GM10248 (cell line): ENCODE measurements at regions of chr3 and their contacts with region 1.

Region 1: DNA sequence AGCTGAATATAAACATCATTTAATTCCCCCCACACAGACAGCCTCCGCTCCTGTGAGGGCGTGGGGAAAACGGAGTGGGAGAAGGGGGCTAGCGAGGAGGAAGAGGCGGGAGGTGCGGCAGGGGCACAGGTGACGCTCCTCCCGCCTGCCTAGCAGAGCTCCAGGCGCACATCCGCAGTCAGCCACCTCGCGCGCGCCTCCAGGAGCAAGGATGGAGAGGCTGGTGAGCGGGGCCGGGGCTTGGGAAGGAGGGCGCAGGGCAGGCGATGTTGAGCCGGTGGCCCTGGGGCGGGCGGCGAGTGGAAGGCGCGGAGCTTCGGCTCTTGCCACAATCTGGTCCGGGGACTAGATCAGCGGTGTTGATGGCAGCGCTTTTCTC is at the start of gene CD200:
- DNase-seq: peak; percentile 55
- CTCF ChIP-seq: no peak

Region 2: GRCh38 chr3:112086076-112086854 is 246.7 kb before region 1 on chr3 and contains the start of gene C3orf52:
- CTCF ChIA-PET with region 1: no interaction called
- POLR2A ChIA-PET with region 1: no interaction called
- DNase-seq: peak; percentile 87
- CTCF ChIP-seq: no peak

Region 3: GRCh38 chr3:112321867-112322649 is 10.9 kb before region 1 on chr3:
- CTCF ChIA-PET with region 1: interaction called, 16 read pairs
- POLR2A ChIA-PET with region 1: interaction called, 6 read pairs
- DNase-seq: no peak
- CTCF ChIP-seq: no peak

Region 4: GRCh38 chr3:112350181-112350825 is 17.3 kb after region 1 on chr3:
- CTCF ChIA-PET with region 1: interaction called, 19 read pairs
- POLR2A ChIA-PET with region 1: no interaction called
- DNase-seq: no peak
- CTCF ChIP-seq: no peak

Region 5: DNA sequence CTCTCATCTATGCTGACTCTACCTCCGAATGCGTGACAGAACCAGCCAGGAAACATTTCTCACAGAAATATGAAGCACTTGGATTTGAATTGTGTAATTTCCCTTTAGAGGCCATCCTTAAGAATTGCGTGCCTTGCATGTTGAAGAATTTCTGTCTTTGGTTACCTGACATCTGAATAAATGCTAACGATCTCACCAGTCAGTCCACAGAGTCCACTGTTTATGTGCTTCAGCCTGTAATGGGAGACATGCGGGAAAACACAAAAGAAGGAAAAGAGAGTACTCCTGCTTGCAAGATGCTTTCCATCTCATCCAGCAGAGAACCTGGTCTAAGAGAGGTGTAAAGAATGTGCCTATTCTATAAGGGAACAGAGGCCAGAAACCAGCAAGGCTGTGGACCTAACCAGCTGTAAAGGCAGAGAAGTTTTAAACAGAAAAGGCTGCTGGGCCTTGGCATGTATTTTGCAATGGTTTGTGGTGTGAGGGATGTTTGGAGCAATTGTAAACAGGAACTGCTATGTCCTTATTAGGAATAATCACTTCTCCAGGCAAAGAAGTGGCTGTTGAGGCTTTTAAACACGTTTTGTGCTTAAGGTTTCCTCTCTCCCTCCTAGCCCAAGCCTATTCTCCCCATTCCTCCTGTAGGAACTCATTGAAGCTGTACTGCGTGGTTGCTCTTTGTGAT is 842.0 kb after region 1 on chr3:
- CTCF ChIA-PET with region 1: no interaction called
- POLR2A ChIA-PET with region 1: no interaction called
- DNase-seq: no peak
- CTCF ChIP-seq: no peak